Heart right ventricle (tissue), 16 donors: ENCODE measurements at regions of chr20 and their contacts with region 1.

Region 1: DNA sequence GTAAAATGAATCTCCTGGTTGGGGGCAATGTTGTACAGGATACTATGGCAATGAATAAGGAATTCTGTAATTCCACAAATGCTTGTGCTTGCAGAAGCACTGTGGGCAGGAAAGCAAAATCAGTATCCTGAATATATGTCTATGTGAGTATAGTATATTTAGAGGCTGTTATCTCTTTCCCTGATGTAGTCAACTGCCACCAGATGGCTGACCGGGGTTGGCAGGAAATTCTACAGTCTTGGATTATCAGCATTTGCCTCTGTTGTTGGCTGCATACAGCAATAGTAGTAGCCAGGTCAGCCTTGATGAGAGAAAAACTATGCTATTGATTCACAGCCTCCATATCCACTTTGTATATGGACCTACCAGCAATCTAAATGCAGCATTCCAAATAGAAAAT is 425.1 kb upstream of the JAG1 start:
- DNase-seq: no peak
- ATAC-seq: peak in 1 of 8 donors; percentile 47
- H3K4me3 ChIP-seq: no peak overlapping the region
- H3K27ac ChIP-seq: no peak overlapping the region
- H3K4me1 ChIP-seq: peaks cover 0 to 11% (median 0%) of the 10 kb centered on the region in 9 donors
- H3K27me3 ChIP-seq: no peaks in the 10 kb centered on the region
- CTCF ChIP-seq: peak in 6 of 9 donors; percentile 14 to 38 (median 25)

Region 2: GRCh38 chr20:11182720-11183119 is 83.8 kb after region 1 on chr20:
- intact Hi-C with region 1: loop called in 1 of 10 experiments (anchors 10 kb)
- DNase-seq: no peak
- ATAC-seq: peak in 1 of 8 donors; percentile 76
- H3K4me3 ChIP-seq: no peak overlapping the region
- H3K27ac ChIP-seq: no peak overlapping the region
- H3K4me1 ChIP-seq: peaks cover 0 to 18% (median 8%) of the 10 kb centered on the region in 9 donors
- H3K27me3 ChIP-seq: no peaks in the 10 kb centered on the region
- CTCF ChIP-seq: no peak